Activated T-helper 1 cell treated with anti-CD3 and anti-CD28 coated beads, Interleukin-12 subunit alpha, Interleukin-12 subunit beta, Interleukin-2, Interleukin-4 antibody, amounts not matched to agents 30 ng/mL and 10 ng/mL and 1 ng/mL, durations not matched to agents 14 hours and 24 hours and 36 hours (primary cell): ENCODE measurements at regions of chr5 and their contacts with region 1.

Region 1: GRCh38 chr5:149960272-149961185 is at the start of gene SLC26A2:
- DNase-seq: peak; percentile 94
- H3K4me3 Mint-ChIP-seq: peak within 1 kb of the TSS; percentile 95
- H3K27ac Mint-ChIP-seq: peak within 1 kb of the TSS; percentile 100
- H3K4me1 Mint-ChIP-seq: peaks cover 37% of the 10 kb centered on the region
- H3K27me3 Mint-ChIP-seq: no peaks in the 10 kb centered on the region
- total RNA-seq, gene SLC26A2: 9.3 and 9.5 TPM in 2 replicates

Region 2: GRCh38 chr5:149636851-149637246 is 323.7 kb before region 1 on chr5:
- intact Hi-C with region 1: loop called (anchors 1 kb)
- DNase-seq: no peak
- H3K4me3 Mint-ChIP-seq: no peak overlapping the region
- H3K27ac Mint-ChIP-seq: no peak overlapping the region
- H3K4me1 Mint-ChIP-seq: peaks cover 20% of the 10 kb centered on the region
- H3K27me3 Mint-ChIP-seq: peaks cover 2% of the 10 kb centered on the region

Region 3: GRCh38 chr5:149731639-149732323 is 228.7 kb before region 1 on chr5:
- intact Hi-C with region 1: loop called (anchors 1 kb)
- DNase-seq: peak; percentile 35
- H3K4me3 Mint-ChIP-seq: peak overlapping the region; percentile 86
- H3K27ac Mint-ChIP-seq: peak overlapping the region; percentile 40
- H3K4me1 Mint-ChIP-seq: peaks cover 5% of the 10 kb centered on the region
- H3K27me3 Mint-ChIP-seq: peaks cover 5% of the 10 kb centered on the region

Region 4: GRCh38 chr5:149796030-149796429 is 164.5 kb before region 1 on chr5:
- intact Hi-C with region 1: no loop called
- DNase-seq: no peak
- H3K4me3 Mint-ChIP-seq: no peak overlapping the region
- H3K27ac Mint-ChIP-seq: no peak overlapping the region
- H3K4me1 Mint-ChIP-seq: no peaks in the 10 kb centered on the region
- H3K27me3 Mint-ChIP-seq: no peaks in the 10 kb centered on the region

Region 5: GRCh38 chr5:149990518-149991376 is 30.2 kb after region 1 on chr5:
- intact Hi-C with region 1: loop called (anchors 2 kb)
- DNase-seq: peak; percentile 47
- H3K4me3 Mint-ChIP-seq: no peak overlapping the region
- H3K27ac Mint-ChIP-seq: no peak overlapping the region
- H3K4me1 Mint-ChIP-seq: peaks cover 5% of the 10 kb centered on the region
- H3K27me3 Mint-ChIP-seq: no peaks in the 10 kb centered on the region

Region 6: DNA sequence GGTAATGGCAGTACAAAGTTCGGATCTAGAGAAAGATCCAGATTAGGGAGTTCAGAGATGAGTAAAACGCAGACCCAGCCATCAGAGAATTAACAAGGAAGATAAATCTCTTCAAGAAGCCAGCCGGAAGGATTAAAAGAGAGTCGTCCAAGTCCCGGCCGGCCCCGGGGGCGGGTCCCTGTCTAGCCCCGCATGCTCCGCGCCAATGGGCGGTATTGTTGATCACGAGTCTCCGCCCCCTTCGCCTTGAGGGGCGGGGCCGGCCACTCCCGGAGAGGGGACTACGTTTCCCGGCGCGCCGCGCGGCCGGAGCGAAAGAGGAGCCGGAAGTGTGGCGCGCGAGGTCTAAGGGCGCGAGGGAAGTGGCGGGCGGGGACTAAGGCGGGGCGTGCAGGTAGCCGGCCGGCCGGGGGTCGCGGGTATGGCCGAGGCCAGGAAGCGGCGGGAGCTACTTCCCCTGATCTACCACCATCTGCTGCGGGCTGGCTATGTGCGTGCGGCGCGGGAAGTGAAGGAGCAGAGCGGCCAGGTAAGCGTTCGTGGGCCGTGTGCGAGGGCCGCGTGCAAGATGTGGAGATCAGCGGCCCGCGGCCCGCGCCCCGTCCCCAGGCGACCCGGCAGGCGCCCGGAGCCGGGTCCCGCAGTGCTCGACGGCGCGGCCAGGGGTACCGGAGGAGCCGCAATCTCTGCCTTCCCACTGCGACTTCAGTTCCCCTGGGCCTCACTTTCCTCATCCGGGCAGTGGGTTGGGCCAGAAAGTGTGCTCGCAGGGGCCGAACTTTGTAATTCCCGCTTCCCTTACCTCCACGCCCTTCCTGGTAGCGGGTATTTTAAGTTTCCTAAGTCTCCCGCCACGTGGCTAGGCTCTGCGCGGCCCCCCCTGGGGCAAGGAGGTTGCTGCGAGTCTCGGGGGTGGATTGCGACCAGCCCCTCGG is 397.1 kb after region 1 on chr5 and contains the start of gene TCOF1:
- intact Hi-C with region 1: loop called (anchors 1 kb)
- DNase-seq: peak; percentile 97
- H3K4me3 Mint-ChIP-seq: peak within 1 kb of the TSS; percentile 93
- H3K27ac Mint-ChIP-seq: peak within 1 kb of the TSS; percentile 91
- H3K4me1 Mint-ChIP-seq: peaks cover 39% of the 10 kb centered on the region
- H3K27me3 Mint-ChIP-seq: no peaks in the 10 kb centered on the region
- total RNA-seq, gene TCOF1: 130 and 131 TPM in 2 replicates

Region 7: GRCh38 chr5:150449517-150450339 is 489.2 kb after region 1 on chr5 and contains the start of gene RPS14:
- intact Hi-C with region 1: loop called (anchors 1 kb)
- DNase-seq: peak; percentile 91
- H3K4me3 Mint-ChIP-seq: peak within 1 kb of the TSS; percentile 92
- H3K27ac Mint-ChIP-seq: peak within 1 kb of the TSS; percentile 100
- H3K4me1 Mint-ChIP-seq: peaks cover 40% of the 10 kb centered on the region
- H3K27me3 Mint-ChIP-seq: peaks cover 2% of the 10 kb centered on the region
- total RNA-seq, gene RPS14: 2,328 and 2,429 TPM in 2 replicates